ENCODE measurements at regions of chr1 and their contacts with region 1.

Region 1: GRCh38 chr1:39701049-39701439 is 9.8 kb upstream of the HPCAL4 start:
- DNase-seq: peak; percentile 8
- ATAC-seq: no peak
- H3K4me3 ChIP-seq: no peak overlapping the region
- H3K27ac ChIP-seq: no peak overlapping the region
- H3K4me1 ChIP-seq: no peaks in the 10 kb centered on the region
- H3K27me3 ChIP-seq: peaks cover 19% of the 10 kb centered on the region
- CTCF ChIP-seq: no peak

Region 2: GRCh38 chr1:39139723-39140360 is 561.2 kb before region 1 on chr1:
- CTCF ChIA-PET with region 1: no interaction called
- POLR2A ChIA-PET with region 1: interaction called, 12 read pairs
- intact Hi-C with region 1: no loop called
- DNase-seq: no peak
- ATAC-seq: no peak
- H3K4me3 ChIP-seq: no peak overlapping the region
- H3K27ac ChIP-seq: no peak overlapping the region
- H3K4me1 ChIP-seq: peaks cover 19% of the 10 kb centered on the region
- H3K27me3 ChIP-seq: no peaks in the 10 kb centered on the region
- CTCF ChIP-seq: no peak

Region 3: GRCh38 chr1:40539338-40539737 is 838.3 kb after region 1 on chr1:
- CTCF ChIA-PET with region 1: no interaction called
- POLR2A ChIA-PET with region 1: no interaction called
- intact Hi-C with region 1: no loop called
- DNase-seq: no peak
- ATAC-seq: no peak
- H3K4me3 ChIP-seq: no peak overlapping the region
- H3K27ac ChIP-seq: no peak overlapping the region
- H3K4me1 ChIP-seq: no peaks in the 10 kb centered on the region
- H3K27me3 ChIP-seq: no peaks in the 10 kb centered on the region
- CTCF ChIP-seq: no peak